Ascending aorta (tissue), 2 donors: ENCODE measurements at regions of chr12 and their contacts with region 1.

Region 1: DNA sequence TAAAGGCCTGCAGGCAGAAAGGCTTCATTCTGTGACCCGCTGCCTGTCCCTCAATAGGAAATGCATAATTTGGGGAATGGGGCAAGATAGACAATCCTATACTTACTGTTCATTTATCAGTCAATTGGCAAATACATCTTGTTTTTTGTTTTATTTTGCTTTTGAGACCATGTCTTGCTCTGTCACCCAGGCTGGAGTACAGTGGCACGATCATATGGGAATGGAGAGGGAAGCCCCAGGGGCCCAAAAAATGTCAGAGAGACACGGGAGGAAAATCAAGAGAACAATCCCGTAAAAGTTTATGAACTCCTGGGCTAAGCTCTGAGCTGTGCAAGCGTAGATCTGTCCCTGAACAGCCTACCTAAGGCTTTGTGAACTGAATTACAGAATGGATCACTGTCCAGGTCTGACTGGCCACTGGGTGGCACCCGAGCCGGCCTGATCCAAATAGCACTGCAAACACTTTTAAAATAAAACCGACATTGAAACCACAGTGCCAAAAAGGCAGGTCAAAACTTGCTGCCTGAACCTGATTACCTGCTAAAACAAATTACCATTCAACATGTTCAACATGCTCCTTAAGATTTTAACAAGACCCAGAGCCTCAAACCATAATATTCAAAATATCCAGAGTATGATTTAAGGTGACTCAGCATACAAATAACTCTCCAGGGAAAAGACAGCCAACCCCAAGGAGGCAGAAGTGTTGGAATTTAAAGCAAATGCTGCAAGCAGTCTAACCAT is 11.8 kb downstream of the COPS7A start:
- DNase-seq: peak in 1 of 2 donors; percentile 75
- H3K4me3 ChIP-seq: no peak overlapping the region
- H3K27ac ChIP-seq: no peak overlapping the region
- H3K4me1 ChIP-seq: no peaks in the 10 kb centered on the region
- H3K27me3 ChIP-seq: no peaks in the 10 kb centered on the region
- CTCF ChIP-seq: peak; percentile 56 to 61 (median 57)

Region 2: GRCh38 chr12:6554168-6555017 is 181.2 kb before region 1 on chr12:
- intact Hi-C with region 1: no loop called
- DNase-seq: peak in 1 of 2 donors; percentile 90
- H3K4me3 ChIP-seq: peak overlapping the region; percentile 70 to 82
- H3K27ac ChIP-seq: peak overlapping the region; percentile 98 to 99
- H3K4me1 ChIP-seq: peaks cover 20 to 55% of the 10 kb centered on the region in 2 donors
- H3K27me3 ChIP-seq: no peaks in the 10 kb centered on the region
- CTCF ChIP-seq: peak; percentile 19 to 63 (median 53)

Region 3: DNA sequence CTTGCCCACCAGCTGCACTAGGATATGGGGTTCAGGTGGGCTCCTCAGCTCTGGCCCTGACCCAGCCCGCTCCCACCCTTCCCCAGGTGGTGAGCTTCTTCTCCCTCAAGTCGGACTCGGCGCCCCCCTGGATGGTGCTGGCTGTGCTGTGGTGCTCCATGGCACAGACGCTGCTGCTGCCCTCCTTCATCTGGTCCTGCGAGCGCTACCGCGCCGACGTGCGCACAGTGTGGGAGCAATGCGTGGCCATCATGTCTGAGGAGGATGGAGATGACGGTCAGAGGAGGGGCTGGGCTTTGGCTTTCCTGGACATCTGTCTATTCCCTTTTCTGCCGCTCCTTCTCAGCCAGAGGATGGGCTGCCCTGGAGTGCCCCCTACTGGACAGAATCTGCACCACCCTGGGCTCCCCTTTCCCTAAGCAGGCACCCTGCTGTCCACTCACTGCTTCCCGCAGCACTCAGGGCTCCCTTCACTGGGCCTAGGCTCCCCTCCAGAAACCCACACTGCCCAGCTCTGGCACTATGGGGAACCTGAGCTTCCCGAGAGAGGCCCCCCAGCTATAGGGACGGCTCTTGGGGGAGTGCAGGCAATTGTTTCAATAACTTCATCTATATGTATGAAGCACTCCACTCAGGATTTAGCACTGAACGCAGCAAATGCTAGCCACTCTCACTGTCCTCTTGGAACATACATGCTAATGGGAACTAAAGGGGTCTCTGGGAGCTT is 89.9 kb after region 1 on chr12:
- intact Hi-C with region 1: loop called (anchors 1 kb)
- DNase-seq: peak; percentile 53 to 93
- H3K4me3 ChIP-seq: peak overlapping the region in 1 of 2 donors; percentile 46
- H3K27ac ChIP-seq: no peak overlapping the region
- H3K4me1 ChIP-seq: peaks cover 3 to 23% of the 10 kb centered on the region in 2 donors
- H3K27me3 ChIP-seq: peaks cover 7% of the 10 kb centered on the region
- CTCF ChIP-seq: peak; percentile 90 to 93 (median 91)